ENCODE measurements at regions of chr3 and their contacts with region 1.

Region 1: DNA sequence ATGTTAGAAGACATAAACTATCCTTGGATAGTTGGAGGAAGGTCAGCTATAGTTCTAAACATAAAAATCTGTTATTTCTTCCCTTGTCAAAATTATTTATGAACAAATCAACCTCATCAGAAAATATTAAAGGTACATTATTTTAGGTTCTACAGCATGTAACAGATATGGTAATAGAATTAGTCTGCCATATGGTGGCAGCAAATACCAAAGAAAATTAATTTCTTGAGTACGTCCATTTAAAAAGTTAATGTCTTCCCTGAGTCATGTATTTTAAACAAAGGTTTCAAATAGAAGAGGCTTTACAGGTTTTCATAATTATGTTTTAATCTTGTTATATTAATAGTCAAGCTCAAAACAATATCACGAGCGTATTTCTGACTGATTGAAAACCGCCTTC is 17.9 kb upstream of the ANKRD28 start:
- DNase-seq: no peak
- ATAC-seq: no peak

Region 2: DNA sequence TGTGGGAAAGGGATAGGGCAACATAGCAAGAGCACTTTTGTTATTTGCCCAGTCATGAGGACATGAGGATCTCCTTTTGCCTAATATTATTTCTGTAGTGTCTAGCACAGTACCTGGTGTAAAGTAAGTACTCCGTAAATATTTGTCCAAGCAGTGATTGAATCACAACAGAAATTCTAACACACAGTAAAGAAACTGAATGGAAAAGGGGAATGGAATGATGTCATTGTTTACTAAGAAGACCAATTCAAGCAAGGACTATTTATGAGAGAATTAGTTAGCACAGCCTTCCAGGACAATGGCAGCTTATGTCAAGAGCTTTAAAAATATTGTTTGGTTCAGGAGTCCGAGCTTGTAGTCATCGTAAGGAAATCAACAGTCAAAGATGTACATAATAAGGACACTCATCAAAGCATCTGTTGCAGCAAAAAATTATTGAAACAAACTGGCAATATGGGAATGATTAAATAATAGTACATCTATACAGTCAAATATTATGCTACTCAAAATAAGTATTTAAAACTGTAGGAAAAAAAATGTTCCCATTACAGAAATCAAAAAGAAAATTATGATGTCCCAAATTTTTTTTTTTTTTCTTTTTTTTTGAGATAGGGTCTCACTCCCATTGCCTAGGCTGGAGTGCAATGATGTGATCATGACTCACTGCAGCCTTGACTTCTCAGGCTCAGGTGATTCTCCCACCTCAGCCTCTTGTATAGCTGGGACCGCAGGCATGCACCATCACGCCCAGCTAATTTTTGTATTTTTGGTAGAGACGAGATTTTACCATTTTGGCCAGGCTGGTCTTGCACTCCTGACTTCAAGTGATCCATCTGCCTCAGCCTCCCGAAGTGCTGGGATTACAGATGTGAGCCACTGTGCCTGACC is 591.8 kb before region 1 on chr3:
- intact Hi-C with region 1: loop called in 1 of 2 experiments (anchors 10 kb)
- DNase-seq: no peak
- ATAC-seq: no peak

Region 3: DNA sequence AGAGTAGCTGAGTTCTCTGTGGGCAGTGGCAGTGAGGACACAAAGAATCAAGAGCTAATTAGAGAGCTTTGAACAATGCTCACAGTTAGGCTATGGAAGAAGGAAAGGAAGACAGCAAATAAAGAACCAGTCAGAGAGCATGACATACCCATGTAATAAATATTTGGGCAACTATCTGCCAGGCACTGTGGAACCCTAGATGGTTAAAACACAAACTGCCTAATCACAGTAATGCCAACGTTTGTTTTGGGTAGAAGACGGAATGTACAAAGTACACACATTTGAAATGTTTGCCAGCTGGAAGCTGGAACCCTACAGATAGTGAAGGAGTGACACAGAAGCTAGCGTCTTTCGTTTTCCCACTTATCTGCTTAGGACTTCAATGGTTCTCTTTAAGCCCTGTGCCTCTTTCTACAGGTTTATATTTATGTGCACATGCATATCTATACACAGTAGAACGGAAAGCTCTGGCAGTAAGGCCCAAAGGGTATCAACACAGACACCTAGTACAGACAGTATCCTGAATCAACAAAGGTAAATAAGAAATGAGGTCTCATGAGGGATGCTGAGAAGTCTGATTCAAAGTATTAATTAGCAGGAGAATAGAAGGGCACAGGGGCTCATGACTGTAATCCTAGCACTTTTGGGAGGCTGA is 62.5 kb before region 1 on chr3:
- intact Hi-C with region 1: no loop called
- DNase-seq: no peak
- ATAC-seq: peak; percentile 30

Region 4: DNA sequence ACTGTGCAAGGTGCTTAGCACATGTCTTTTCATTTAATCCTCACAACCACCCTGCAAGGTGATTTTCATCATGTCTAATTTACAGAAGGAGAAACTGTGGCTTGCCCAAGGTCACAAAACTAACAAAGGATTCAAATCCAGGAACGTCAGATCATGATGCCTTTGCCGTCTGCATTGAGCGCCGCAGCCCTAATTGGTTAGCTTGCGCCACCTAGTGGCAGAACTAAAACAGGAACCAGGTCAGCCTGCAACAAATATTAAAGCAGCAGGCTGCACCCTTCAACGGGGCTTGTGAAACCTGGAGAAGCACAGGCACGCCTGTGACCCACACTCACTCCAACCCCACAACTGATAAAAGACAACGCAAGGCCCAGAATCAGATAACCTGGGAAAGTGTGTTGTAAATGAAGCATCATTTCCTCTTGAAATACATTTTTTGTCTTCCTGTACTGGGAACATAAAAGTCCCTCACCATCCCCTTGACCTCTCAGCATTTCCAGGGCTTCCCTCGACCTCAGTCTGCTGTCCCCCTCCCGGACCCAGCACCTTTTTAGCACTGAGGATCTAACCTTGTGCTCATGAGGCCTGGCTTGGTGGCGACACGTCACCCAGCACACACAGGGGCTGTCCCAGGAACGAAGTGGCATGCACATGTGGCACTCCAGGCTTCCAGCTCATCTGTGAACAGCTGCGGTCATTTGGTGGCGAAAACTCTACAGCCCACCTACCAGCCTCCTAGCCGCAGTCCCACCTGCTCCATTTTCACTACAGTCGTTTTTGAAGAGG is 431.8 kb after region 1 on chr3:
- intact Hi-C with region 1: loop called (anchors 5 to 10 kb)
- DNase-seq: peak; percentile 65 to 82
- ATAC-seq: peak; percentile 75

Region 5: DNA sequence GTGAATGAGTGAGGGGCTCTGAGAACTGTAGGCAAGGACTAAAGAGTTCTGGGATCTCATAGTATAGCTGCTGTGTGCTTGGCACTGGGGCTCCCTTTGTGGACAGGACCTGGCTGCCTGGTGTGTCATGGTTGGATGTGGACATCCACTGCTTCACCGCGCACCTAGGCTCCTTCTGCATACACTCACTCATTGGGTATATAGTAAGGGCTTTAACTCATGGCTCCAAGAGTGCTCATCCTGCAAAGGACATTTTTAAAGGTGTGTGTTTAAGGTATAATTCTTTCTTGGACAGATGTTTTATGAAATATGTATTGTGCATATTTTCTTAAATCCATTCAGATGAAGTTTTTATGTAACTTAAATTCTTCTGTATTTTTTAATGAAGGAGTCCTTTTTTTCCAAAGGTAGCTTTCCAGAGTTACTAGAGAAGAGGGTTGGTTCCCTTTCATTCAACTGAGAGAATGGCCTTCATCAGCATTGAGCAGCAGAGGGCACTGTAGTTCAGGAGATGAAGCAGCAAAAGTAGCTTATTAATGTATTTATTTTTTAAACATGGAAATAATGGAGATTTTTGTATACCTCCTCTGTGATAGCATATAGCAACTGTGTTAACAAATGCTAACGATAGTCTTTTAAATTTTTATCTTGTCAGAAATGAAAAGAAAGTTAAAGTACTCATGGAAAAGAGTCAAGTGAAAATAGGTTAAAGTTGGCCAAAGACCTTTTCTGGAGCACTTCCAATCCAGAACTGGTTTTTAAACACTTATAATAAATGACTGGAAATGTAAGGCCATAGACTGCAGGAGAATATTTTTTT is 474.5 kb after region 1 on chr3:
- intact Hi-C with region 1: no loop called
- DNase-seq: peak in 1 of 2 donors; percentile 53
- ATAC-seq: peak; percentile 56

Measured in left colon (tissue), 2 donors.